Left ventricle myocardium superior (tissue), 1 donor: ENCODE measurements at regions of chr2 and their contacts with region 1.

Region 1: GRCh38 chr2:86176597-86176996 is 18.7 kb downstream of the IMMT start:
- DNase-seq: no peak
- ATAC-seq: no peak

Region 2: DNA sequence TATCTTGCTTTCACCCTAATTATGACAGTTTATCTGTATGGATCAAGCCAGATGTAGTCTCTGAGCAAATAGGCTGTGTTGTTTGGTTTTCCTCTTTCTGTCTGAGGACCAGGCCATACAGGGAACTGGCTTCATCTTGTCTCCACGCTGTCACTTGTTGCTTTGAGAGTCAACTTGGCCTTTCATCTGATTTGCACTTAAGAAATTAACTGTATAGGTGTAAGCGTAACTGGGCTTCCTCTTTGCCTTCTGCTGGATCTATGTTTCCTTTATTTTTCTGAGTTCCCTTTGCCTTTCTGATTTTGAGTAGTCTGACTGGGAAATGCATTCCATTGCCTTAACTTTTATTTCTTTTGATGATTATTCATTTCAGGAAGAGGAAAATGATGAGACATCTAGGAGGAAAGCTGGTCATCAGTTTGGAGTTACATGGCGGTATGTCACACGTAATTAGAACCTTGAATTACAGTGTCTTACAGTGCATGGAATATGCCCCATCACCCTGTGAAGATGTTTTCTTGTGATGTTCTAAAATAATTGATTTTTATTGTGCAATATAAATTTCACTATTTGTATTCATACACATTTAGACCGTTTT is 53.2 kb before region 1 on chr2:
- intact Hi-C with region 1: loop called (anchors 10 kb)
- DNase-seq: no peak
- ATAC-seq: no peak